Head of caudate nucleus (tissue), 42 donors: ENCODE measurements at regions of chr1 and their contacts with region 1.

Region 1: GRCh38 chr1:24199289-24199900 is 12.3 kb upstream of the IFNLR1 start:
- DNase-seq: peak; percentile 33 to 91 (median 76)

Region 2: GRCh38 chr1:24391882-24392603 is 192.6 kb after region 1 on chr1:
- intact Hi-C with region 1: loop called (anchors 2 kb)
- DNase-seq: peak; percentile 29 to 90 (median 74)

Region 3: DNA sequence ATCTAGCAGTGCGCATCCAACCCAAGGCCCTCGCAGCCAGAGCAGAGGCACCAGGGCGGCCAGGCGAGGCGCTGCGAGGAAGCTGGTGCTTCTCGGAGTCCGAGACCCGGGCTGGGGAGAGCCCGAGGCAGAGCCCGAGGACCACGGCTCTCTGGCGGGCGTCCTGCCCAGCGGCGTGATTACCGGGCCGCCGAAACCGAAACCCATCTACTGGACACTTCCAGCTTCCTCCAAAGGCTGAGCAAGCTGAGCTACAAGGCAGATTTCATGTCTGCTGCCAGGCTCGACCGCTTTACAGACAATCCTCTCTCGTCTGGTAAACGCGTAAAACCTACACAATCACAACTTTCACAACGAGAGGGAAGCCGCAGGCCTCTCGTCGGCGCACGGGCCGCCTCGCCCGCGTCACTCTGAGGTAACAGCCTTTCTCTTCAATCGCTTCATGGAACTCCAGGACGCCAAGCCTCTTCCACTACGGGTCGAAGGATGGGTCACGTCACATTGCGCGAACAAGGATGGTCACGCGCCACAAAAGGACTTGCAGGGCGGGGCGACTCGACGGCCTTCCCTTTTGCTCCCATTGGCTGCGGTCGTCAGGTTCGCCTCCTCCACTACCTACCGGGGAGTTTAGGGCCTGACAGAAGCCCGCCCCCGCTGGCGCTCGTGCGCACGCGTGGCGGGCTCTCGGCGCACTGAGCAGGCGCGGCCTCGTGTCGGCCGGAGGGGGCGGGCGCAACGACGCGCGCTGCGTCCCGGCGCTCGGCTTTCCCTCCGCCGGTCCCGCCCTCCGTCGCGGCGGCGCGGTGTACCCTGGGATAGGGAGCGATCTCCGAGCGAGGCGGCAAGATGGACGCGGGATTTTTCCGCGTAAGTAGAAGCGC is 443.3 kb after region 1 on chr1 and contains the start of gene SRRM1:
- intact Hi-C with region 1: loop called (anchors 5 kb)
- DNase-seq: peak; percentile 98 to 100 (median 100)